ENCODE measurements at regions of chr5 and their contacts with region 1.

Region 1: GRCh38 chr5:103258368-103258956 is at the start of gene MACIR:
- DNase-seq: peak; percentile 99
- ATAC-seq: peak; percentile 98
- total RNA-seq, gene MACIR: 3.9 TPM

Region 2: DNA sequence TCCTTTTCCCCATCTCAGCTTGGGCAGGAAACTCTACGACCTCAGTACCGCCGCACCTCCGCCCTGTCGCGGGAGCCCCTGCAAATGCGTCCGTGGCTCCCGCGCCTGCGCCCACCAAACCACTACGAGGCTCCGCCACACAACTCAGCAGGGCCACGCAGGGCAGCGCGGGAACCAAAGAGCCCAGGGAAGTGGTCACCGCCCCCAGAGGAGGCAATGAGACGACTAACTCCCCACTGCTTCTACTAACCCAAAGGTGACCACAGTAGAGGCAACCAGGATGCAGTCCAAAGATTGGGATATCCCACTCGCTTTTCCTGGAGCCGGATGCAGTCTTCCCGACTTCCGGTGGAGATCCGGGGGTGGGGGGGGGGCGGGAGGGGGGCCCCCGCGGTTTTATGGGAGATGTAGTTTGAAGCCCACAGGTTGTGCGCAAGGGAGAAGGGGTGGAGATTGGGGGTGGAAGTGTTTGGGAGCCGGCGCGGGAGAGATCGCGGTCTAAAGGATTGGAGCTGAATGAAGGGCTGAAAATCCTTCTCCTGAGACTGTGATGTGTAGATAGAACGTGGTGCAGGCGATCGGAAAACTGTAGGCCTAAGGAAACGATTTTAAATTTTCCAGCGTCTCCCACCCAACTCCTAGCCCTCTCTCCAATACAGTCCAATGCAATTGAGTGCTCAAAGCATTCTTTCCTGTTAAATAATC is 304.1 kb after region 1 on chr5 and contains the start of gene NUDT12:
- intact Hi-C with region 1: loop called (anchors 5 kb)
- DNase-seq: peak; percentile 79
- ATAC-seq: peak; percentile 97
- total RNA-seq, gene NUDT12: 11.6 TPM

Measured in Right ventricle myocardium superior (tissue), 1 donor.